Dorsolateral prefrontal cortex (tissue), 120 donors: ENCODE measurements at regions of chr9 and their contacts with region 1.

Region 1: DNA sequence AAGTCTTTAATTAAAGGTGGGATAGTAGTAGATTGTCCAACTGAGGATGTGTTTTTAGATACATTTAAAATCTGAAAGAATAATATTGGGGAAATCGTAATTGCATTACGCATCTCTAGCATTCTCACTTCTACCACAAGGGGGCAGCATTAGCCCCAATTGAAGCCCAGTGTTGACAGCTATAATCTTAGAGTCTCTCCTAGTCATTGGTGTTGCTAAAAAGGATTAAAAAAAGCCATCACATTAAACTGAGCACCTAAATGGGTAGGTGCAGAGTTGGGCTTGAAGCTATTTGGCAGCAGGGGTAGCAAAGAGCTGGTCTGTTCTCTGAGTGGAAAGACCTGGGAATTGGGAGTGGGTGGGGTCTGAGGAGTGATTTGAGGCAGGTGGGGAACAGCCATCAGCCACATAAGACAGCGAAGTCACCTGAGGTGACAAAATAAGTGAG is 177.2 kb downstream of the OSTF1 start:
- DNase-seq: peak in 3 of 10 donors; percentile 32 to 61 (median 53)
- H3K4me3 ChIP-seq: no peak overlapping the region
- H3K27ac ChIP-seq: no peak overlapping the region
- H3K27me3 ChIP-seq: peaks cover 0 to 3% (median 0%) of the 10 kb centered on the region in 45 donors
- CTCF ChIP-seq: peak; percentile 82 to 97 (median 90)

Region 2: GRCh38 chr9:75299324-75299723 is 33.8 kb after region 1 on chr9:
- intact Hi-C with region 1: no loop called
- DNase-seq: no peak
- H3K4me3 ChIP-seq: no peak overlapping the region
- H3K27ac ChIP-seq: no peak overlapping the region
- H3K27me3 ChIP-seq: peaks cover 0 to 3% (median 0%) of the 10 kb centered on the region in 45 donors
- CTCF ChIP-seq: no peak

Region 3: DNA sequence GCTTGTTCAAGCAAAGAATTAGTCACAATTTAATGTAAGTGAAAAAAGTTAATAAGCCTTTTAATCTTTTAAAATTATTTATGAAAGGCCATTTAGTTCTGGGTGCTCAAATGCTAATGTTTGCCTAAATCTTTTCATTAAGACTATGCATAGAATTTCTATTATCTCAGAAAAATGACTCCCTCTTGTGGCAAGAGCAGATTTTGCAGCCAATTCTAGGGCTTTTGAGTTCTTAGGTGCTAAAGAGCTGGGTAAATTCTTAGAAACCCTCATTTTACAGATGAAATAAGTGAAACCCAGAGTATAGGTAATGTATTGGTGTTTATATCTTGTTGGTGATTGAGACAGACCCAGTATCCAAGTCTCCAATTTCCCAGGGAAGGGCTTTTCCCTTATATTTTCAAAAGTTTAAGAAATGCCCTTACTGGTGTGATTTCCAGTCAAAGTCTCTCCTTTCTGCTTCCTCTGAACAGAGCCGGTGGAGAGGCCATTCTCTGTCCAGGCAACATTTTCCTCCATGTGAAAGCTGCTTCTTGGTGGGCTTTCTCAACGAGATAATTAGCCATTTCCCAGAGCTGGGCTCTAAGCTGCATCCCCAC is 600.8 kb after region 1 on chr9:
- intact Hi-C with region 1: loop called in 1 of 2 experiments (anchors 10 kb)
- DNase-seq: peak in 3 of 10 donors; percentile 6 to 69 (median 17)
- H3K4me3 ChIP-seq: no peak overlapping the region
- H3K27ac ChIP-seq: no peak overlapping the region
- H3K27me3 ChIP-seq: peaks cover 0 to 6% (median 0%) of the 10 kb centered on the region in 45 donors
- CTCF ChIP-seq: peak; percentile 64 to 87 (median 77)